Aorta (tissue), 5 donors: ENCODE measurements at regions of chr17 and their contacts with region 1.

Region 1: DNA sequence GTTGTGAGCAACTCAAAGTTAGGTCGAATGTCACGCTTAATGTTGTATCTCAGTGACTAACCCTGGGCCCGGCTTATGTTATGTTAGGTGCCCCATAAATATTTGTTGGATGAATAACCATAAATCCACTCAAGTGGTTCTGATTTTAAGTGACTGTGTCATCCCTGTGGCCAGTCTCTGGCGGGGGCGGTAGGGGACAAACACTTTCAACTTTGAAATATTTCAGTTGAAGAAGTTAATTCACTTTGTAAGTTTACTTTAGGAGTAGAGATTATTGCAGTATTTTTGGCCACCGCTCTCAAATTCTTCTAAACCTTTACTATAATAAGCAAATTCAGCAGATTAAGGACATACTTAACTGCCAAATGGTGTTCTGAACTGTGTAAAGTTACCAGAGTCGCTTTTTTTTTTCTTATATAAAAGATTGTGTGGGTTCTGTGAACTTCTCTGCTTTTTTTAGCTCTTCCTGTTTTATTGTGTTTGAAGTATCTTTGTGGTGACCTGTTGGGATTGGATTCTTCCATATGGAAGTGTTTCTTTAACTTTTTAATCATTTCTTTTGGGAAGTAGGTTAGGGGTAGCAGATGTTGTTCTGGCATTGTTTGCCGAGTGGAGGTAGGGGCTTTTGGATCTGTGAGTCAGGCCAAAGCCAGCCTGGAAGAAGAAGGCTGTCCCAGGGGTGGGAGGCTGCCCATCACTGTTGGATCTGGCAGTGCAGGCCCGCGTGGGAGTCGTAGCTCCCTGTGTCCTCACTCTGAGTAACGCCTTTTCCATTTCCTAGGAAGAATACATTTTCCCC is 61.4 kb upstream of the TBX2 start:
- DNase-seq: peak in 1 of 2 donors; percentile 62
- ATAC-seq: peak; percentile 30
- H3K4me3 ChIP-seq: no peak overlapping the region
- H3K27ac ChIP-seq: peak overlapping the region; percentile 46 to 95
- H3K4me1 ChIP-seq: peaks cover 3 to 4% of the 10 kb centered on the region in 2 donors
- H3K27me3 ChIP-seq: no peaks in the 10 kb centered on the region

Region 2: GRCh38 chr17:61088553-61088952 is 249.6 kb before region 1 on chr17:
- intact Hi-C with region 1: no loop called
- DNase-seq: no peak
- ATAC-seq: no peak
- H3K4me3 ChIP-seq: no peak overlapping the region
- H3K27ac ChIP-seq: no peak overlapping the region
- H3K4me1 ChIP-seq: no peaks in the 10 kb centered on the region
- H3K27me3 ChIP-seq: no peaks in the 10 kb centered on the region

Region 3: GRCh38 chr17:61260071-61260797 is 78.0 kb before region 1 on chr17:
- intact Hi-C with region 1: loop called in 1 of 2 experiments (anchors 5 kb)
- DNase-seq: no peak
- ATAC-seq: peak; percentile 77
- H3K4me3 ChIP-seq: peak overlapping the region in 1 of 2 donors; percentile 31
- H3K27ac ChIP-seq: peak overlapping the region in 1 of 2 donors; percentile 82
- H3K4me1 ChIP-seq: peaks cover 7 to 13% of the 10 kb centered on the region in 2 donors
- H3K27me3 ChIP-seq: no peaks in the 10 kb centered on the region

Region 4: GRCh38 chr17:61538480-61538879 is 200.3 kb after region 1 on chr17:
- intact Hi-C with region 1: no loop called
- DNase-seq: no peak
- ATAC-seq: no peak
- H3K4me3 ChIP-seq: no peak overlapping the region
- H3K27ac ChIP-seq: no peak overlapping the region
- H3K4me1 ChIP-seq: no peaks in the 10 kb centered on the region
- H3K27me3 ChIP-seq: no peaks in the 10 kb centered on the region

Region 5: GRCh38 chr17:61551255-61551742 is 213.1 kb after region 1 on chr17:
- intact Hi-C with region 1: no loop called
- DNase-seq: no peak
- ATAC-seq: no peak
- H3K4me3 ChIP-seq: no peak overlapping the region
- H3K27ac ChIP-seq: no peak overlapping the region
- H3K4me1 ChIP-seq: no peaks in the 10 kb centered on the region
- H3K27me3 ChIP-seq: no peaks in the 10 kb centered on the region

Region 6: DNA sequence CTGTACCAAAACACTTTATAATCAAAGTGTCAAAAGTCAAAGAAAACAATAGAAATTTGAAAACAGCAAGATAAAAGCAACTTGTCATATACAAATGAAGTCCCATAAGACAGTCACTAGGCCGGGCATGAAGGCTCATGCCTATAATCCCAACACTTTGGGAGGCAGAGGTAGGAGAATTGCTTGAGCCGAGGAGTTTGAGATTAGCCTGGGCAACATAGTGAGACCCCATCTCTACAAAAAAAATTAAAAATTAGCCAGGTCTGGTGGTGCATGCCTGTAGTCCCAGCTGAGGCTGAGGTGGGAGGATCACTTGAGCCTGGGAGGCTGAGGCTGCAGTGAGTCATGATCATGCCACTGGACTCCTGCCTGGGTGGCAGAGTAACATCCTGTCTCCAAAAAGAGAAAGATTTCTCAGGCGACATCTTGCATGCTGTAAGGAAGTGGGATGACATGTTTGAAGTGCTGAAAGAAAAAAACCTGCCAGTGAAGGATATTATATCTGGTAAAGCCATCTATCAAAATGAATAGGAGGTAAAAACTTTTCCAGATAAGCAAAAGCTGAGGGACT is 351.5 kb after region 1 on chr17:
- intact Hi-C with region 1: no loop called
- DNase-seq: no peak
- ATAC-seq: no peak
- H3K4me3 ChIP-seq: no peak overlapping the region
- H3K27ac ChIP-seq: no peak overlapping the region
- H3K4me1 ChIP-seq: no peaks in the 10 kb centered on the region
- H3K27me3 ChIP-seq: no peaks in the 10 kb centered on the region